KBM-7 (cell line): ENCODE measurements at regions of chr18 and their contacts with region 1.

Region 1: GRCh38 chr18:59308248-59308937 is 10.1 kb downstream of the CPLX4 start:
- DNase-seq: peak; percentile 79

Region 2: DNA sequence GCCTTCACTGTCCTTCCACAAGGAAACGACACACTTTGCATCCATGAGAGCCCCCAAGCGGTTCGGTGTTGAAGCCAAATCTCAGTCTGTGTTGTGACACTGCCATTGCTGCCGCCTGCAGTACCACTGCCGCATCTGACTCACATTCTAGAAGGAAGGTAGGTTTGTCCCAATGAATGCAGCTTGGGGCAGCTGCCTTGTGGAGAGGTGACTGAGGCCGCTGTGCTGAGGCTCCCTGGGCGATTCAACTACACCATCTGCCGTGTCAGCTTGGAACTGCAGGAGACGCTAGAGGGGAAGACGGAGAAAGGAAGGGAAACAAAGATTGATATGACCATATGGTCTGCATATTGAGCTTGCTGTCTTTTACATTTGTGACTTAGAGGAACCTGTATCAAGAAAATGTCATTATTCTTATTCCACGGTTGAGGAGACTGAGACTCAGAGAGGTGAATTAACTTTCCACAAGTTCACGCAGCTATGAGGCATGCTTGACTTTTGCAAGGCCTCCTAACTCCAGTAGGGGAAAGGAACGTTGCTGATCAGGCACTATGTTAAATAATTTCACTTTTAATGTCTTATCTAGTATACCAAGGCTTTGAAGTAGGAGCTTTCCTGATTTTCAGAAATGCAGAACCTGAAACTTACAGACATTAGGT is 94.2 kb after region 1 on chr18:
- in situ Hi-C with region 1: loop called (anchors 25 kb)
- DNase-seq: peak; percentile 87